ENCODE measurements at regions of chr16 and their contacts with region 1.

Region 1: GRCh38 chr16:20598832-20599469 is 22.8 kb upstream of the ACSM2B start:
- DNase-seq: no peak
- H3K4me3 ChIP-seq: no peak overlapping the region
- H3K27ac ChIP-seq: no peak overlapping the region
- H3K4me1 ChIP-seq: no peaks in the 10 kb centered on the region
- H3K27me3 ChIP-seq: no peaks in the 10 kb centered on the region
- CTCF ChIP-seq: no peak

Region 2: DNA sequence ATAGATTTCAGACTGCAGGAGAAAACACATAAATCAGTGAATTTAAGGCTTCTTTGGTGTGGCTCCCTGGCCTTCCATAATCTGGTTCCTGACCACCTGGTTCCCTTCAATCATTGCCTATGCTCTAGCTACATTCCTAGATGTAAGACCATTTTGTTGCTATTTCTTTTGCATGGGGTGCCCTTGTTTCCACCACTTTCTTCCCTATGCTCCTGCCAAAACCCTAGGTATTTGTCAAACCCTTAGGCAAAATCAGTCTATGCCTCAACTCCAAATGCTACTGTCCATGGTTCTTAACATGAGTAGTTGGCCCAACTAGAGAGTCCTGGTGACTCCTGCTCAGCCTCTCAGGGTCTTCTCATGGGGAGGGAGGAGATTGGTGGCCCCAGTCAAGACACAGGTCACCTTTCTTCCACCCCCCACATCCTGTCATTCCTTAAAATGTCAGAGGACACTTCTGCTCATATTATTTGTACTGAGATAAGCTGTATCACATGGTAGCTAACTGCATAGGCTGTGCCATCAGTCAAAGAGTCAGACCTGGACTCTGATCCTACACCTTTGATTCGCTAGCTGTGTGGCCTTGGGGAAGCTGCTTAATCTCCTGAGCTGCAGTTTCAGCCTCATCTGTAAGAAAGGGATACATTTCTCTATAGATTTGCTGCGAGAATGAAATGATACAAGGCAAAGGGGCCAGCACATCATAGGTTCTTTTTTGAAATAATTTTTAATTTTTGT is 174.7 kb before region 1 on chr16:
- CTCF ChIA-PET with region 1: no interaction called
- POLR2A ChIA-PET with region 1: no interaction called
- intact Hi-C with region 1: loop called (anchors 10 kb)
- DNase-seq: no peak
- H3K4me3 ChIP-seq: no peak overlapping the region
- H3K27ac ChIP-seq: no peak overlapping the region
- H3K4me1 ChIP-seq: no peaks in the 10 kb centered on the region
- H3K27me3 ChIP-seq: peaks cover 1% of the 10 kb centered on the region; the same call in 1 of the 2 replicates
- CTCF ChIP-seq: no peak